Common myeloid progenitor, CD34-positive (primary cell): ENCODE measurements at regions of chr10 and their contacts with region 1.

Region 1: GRCh38 chr10:71696628-71697326 is 22.8 kb downstream of the C10orf105 start:
- DNase-seq: peak; percentile 37 to 69 (median 47)
- H3K4me3 ChIP-seq: no peak overlapping the region
- H3K27ac ChIP-seq: no peak overlapping the region
- H3K4me1 ChIP-seq: peaks cover 0 to 52% (median 24%) of the 10 kb centered on the region in 4 experiments
- H3K27me3 ChIP-seq: no peaks in the 10 kb centered on the region

Region 2: GRCh38 chr10:71671994-71672946 is 24.5 kb before region 1 on chr10:
- CTCF ChIA-PET with region 1: interaction called, 14 read pairs
- POLR2A ChIA-PET with region 1: no interaction called
- DNase-seq: no peak
- H3K4me3 ChIP-seq: no peak overlapping the region
- H3K27ac ChIP-seq: no peak overlapping the region
- H3K4me1 ChIP-seq: peaks cover 0 to 30% (median 7%) of the 10 kb centered on the region in 4 experiments
- H3K27me3 ChIP-seq: no peaks in the 10 kb centered on the region

Region 3: GRCh38 chr10:71795248-71795647 is 98.5 kb after region 1 on chr10:
- CTCF ChIA-PET with region 1: no interaction called
- POLR2A ChIA-PET with region 1: no interaction called
- DNase-seq: peak; percentile 24 to 66 (median 60)
- H3K4me3 ChIP-seq: no peak overlapping the region
- H3K27ac ChIP-seq: no peak overlapping the region
- H3K4me1 ChIP-seq: peaks cover 10 to 59% (median 49%) of the 10 kb centered on the region in 4 experiments
- H3K27me3 ChIP-seq: no peaks in the 10 kb centered on the region

Region 4: DNA sequence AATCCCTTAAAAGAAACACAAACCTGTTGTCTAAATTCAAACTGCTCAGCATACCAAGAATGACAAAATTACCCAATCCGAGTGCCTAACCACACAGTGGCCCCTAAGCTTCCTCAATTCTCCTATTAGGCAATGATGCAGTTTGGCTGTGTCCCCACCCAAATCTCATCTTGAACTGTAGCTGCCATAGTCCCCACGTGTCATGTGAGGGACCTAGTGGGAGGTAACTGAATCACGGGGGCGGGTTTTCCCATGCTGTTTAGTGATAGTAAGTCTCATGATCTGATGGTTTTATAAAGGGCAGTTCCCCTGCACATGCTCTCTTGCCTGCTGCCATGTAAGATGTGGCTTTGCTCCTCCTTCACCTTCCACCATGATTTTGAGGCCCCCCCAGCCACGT is 132.4 kb after region 1 on chr10:
- CTCF ChIA-PET with region 1: no interaction called
- POLR2A ChIA-PET with region 1: no interaction called
- DNase-seq: peak; percentile 37 to 76 (median 70)
- H3K4me3 ChIP-seq: no peak overlapping the region
- H3K27ac ChIP-seq: no peak overlapping the region
- H3K4me1 ChIP-seq: peaks cover 0 to 2% (median 0%) of the 10 kb centered on the region in 4 experiments
- H3K27me3 ChIP-seq: no peaks in the 10 kb centered on the region

Region 5: DNA sequence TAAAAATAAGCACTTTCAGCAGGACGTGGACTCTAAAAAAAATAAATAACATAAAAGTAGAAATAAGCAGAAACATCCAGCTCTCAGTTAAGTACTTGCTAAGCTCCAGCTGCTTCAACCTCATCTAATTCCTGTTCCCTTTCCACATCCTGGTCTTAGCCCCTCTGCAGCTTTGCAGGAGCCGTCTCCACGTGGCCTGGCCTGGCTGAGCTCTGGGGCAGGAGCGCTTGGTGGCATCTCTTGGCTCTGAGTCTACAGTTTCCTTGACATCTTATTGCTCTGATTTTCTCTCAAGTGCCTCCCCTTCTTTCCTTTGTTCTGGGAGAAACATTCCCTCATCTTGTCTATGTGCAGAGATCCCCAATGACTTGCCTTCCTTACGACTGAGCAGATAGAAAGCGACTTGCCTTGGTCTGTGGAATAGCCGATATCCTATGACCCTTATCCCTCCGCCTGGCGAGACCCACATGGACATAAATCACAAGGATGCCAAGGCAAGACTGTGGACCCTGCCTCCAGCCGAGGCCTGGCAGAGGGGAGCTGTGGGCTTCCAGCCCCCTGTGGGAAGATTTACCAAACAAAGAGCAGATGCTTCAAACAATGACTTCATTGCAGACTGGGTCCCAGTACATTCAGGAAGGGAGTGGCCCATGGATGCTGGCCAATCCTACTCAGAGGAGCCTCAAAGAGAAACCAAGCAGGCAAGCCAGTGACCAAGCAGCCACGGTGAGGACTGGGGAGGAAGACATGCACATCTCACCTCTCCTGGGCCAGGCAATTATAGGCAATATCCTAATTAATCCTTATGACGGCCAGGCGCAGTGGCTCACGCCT is 329.7 kb after region 1 on chr10:
- CTCF ChIA-PET with region 1: no interaction called
- POLR2A ChIA-PET with region 1: no interaction called
- DNase-seq: no peak
- H3K4me3 ChIP-seq: no peak overlapping the region
- H3K27ac ChIP-seq: no peak overlapping the region
- H3K4me1 ChIP-seq: no peaks in the 10 kb centered on the region
- H3K27me3 ChIP-seq: peaks cover 0 to 2% (median 0%) of the 10 kb centered on the region in 5 experiments